ENCODE measurements at regions of chr4 and their contacts with region 1.

Region 1: GRCh38 chr4:183797445-183798300 is 107.4 kb upstream of the STOX2 start:
- DNase-seq: peak; percentile 57
- ATAC-seq: peak; percentile 79

Region 2: DNA sequence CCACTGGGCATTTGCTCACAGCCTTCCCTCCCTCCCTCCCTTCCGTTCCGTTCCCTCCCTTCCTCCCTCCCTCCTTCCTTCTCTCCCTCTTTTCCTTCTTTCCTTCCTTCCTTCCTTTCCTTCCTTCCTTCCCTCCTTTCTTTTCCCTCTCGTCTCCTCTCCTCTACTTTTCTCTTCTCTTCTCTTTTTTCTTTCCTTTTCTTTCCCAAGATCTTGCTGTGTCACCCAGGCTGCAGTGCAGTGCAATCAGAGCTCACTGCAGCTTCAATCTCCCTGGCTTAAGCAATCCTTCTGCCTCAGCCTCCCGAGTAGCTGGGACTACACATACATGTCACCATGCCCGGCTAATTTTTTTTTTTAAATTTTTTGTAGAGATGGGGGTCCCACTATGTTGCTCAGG is 319.6 kb before region 1 on chr4:
- intact Hi-C with region 1: no loop called
- DNase-seq: no peak
- ATAC-seq: no peak

Region 3: DNA sequence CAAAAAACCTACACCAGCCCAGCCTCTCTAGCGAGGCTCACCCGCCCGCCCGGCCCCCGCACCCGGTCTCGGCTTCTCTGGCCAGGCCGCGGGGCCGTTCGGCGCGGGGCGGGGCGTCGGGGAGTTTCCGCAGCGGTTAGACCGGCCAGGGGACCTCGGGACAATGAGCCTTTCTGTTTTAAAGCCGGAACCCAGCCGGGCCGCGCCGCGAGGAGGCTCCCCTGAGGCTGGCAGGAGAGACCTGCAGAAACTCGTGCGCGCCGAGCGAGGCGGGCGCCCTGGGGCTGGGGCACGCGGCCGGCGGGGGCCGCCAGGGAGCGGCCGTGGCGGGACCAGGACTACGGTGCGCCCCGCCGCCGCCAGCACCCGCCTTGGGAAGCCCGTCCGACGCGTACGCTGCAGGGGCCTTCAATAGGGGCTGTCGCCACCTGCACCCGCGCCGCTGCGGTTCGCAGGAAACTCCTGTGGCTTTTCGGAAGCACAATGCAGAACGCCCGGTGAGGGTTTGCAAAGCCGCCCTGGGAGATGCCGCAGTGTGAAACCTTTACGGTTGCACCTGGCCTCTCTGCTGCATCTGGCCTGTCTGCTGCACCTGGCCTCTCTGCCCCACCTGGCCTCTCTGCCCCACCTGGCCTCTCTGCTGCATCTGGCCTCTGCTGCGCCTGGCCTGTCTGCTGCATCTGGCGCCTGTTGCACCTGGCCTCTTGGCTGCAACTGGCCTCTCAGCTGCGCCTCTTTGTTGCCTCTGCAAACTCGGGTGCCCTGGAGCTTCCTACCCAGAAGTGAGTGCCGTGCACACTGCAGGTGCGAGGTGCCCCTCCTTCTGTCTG is 74.7 kb before region 1 on chr4:
- intact Hi-C with region 1: loop called (anchors 5 kb)
- DNase-seq: peak; percentile 80
- ATAC-seq: peak; percentile 79

Measured in Right ventricle myocardium superior (tissue), 1 donor.